CD8-positive, alpha-beta memory T cell (primary cell): ENCODE measurements at regions of chr7 and their contacts with region 1.

Region 1: DNA sequence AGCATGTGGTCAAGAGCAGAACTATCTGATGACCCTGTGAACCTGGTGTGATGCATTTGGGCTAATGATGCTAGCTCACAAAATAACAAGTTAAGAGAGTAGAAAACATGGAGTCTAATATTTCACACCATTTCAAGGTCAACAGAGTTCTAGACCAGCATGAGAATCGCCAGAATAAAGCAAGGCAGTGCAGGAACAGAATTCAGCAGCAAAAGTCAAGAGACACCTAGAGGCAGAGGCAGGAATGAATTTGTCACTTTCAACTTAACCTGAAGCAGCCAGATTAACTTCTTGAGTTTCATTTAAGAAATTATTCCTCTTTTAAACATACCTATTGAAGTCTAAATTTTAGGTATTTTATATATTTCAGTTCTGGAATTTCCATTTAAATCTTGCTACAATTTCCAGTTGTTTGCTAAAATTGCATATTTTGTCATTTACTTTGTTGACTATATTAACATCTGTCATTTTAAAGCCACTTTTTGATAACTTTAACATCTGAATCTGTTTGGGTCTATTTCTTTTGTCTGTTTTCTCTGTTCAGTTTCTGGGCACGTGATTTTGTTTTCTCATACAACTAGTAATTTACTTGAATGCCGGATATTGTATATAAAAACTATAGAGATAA is 44.2 kb upstream of the PRSS58 start:
- DNase-seq: no peak
- H3K4me3 ChIP-seq: no peak overlapping the region
- H3K4me3 Mint-ChIP-seq: no peak overlapping the region
- H3K27ac ChIP-seq: no peak overlapping the region
- H3K27ac Mint-ChIP-seq: no peak overlapping the region
- H3K4me1 ChIP-seq: peaks cover 16% of the 10 kb centered on the region
- H3K4me1 Mint-ChIP-seq: peaks cover 15 to 33% (median 16%) of the 10 kb centered on the region in 3 donors
- H3K27me3 ChIP-seq: no peaks in the 10 kb centered on the region
- H3K27me3 Mint-ChIP-seq: peaks cover 13 to 22% of the 10 kb centered on the region in 2 donors

Region 2: DNA sequence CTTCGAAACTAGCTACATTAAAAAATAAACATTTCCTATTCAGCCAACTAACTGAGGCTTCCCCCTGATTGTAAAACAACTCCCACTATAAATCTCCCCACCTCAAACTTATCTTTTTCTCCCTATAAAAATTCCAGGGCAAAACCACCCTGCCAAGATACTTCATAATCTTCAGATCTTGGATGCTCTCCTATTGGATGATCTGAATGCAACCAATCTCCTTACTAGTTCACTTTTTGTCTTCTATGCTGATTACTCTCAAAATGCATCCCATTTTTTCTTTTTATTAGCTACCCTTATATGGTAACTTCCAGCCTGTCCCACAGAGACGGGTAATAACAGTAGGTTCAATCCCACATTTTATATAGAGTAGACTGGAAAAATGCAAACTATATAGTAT is 29.2 kb before region 1 on chr7:
- CTCF ChIA-PET with region 1: no interaction called
- POLR2A ChIA-PET with region 1: no interaction called
- DNase-seq: no peak
- H3K4me3 ChIP-seq: no peak overlapping the region
- H3K4me3 Mint-ChIP-seq: no peak overlapping the region
- H3K27ac ChIP-seq: no peak overlapping the region
- H3K27ac Mint-ChIP-seq: no peak overlapping the region
- H3K4me1 ChIP-seq: no peaks in the 10 kb centered on the region
- H3K4me1 Mint-ChIP-seq: no peaks in the 10 kb centered on the region
- H3K27me3 ChIP-seq: no peaks in the 10 kb centered on the region
- H3K27me3 Mint-ChIP-seq: peaks cover 7 to 41% of the 10 kb centered on the region in 2 donors

Region 3: DNA sequence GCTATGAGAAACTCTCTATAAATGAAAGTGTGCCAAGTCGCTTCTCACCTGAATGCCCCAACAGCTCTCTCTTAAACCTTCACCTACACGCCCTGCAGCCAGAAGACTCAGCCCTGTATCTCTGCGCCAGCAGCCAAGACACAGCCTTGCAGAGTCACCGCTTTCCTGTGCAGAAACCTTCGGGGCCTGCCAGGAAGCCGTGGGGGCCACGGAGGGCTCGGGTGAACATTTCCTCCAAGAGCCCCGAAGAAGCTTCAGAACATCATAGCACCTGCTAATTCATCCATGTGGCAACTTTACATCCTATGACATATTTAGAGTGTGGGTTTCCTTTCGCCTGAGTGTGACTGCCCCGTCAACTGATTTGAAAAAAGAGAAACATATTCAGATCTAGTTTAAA is 11.5 kb after region 1 on chr7:
- CTCF ChIA-PET with region 1: interaction called, 24 read pairs
- POLR2A ChIA-PET with region 1: no interaction called
- DNase-seq: peak in 3 of 5 donors; percentile 16 to 42 (median 40)
- H3K4me3 ChIP-seq: no peak overlapping the region
- H3K4me3 Mint-ChIP-seq: peak overlapping the region in 6 of 7 donors; percentile 19 to 70 (median 50)
- H3K27ac ChIP-seq: no peak overlapping the region
- H3K27ac Mint-ChIP-seq: peak overlapping the region in 6 of 8 donors; percentile 7 to 75 (median 51)
- H3K4me1 ChIP-seq: peaks cover 6% of the 10 kb centered on the region
- H3K4me1 Mint-ChIP-seq: peaks cover 13 to 23% (median 20%) of the 10 kb centered on the region in 3 donors
- H3K27me3 ChIP-seq: no peaks in the 10 kb centered on the region
- H3K27me3 Mint-ChIP-seq: peaks cover 11 to 28% of the 10 kb centered on the region in 2 donors

Region 4: GRCh38 chr7:142345811-142346210 is 43.8 kb after region 1 on chr7:
- CTCF ChIA-PET with region 1: interaction called, 11 read pairs
- POLR2A ChIA-PET with region 1: interaction called, 3 read pairs
- DNase-seq: peak; percentile 28 to 68 (median 51)
- H3K4me3 ChIP-seq: no peak overlapping the region
- H3K4me3 Mint-ChIP-seq: peak overlapping the region; percentile 17 to 73 (median 56)
- H3K27ac ChIP-seq: no peak overlapping the region
- H3K27ac Mint-ChIP-seq: peak overlapping the region in 7 of 8 donors; percentile 26 to 76 (median 69)
- H3K4me1 ChIP-seq: peaks cover 23% of the 10 kb centered on the region
- H3K4me1 Mint-ChIP-seq: peaks cover 25 to 30% (median 28%) of the 10 kb centered on the region in 3 donors
- H3K27me3 ChIP-seq: no peaks in the 10 kb centered on the region
- H3K27me3 Mint-ChIP-seq: peaks cover 3 to 5% of the 10 kb centered on the region in 2 donors